MCF 10A (cell line): ENCODE measurements at regions of chr11 and their contacts with region 1.

Region 1: GRCh38 chr11:117833401-117833891 is 8.9 kb upstream of the FXYD2 start:
- DNase-seq: peak; percentile 75
- H3K4me3 Mint-ChIP-seq: no peak overlapping the region
- H3K27ac Mint-ChIP-seq: no peak overlapping the region
- H3K4me1 Mint-ChIP-seq: peaks cover 5% of the 10 kb centered on the region
- H3K27me3 Mint-ChIP-seq: peaks cover 46% of the 10 kb centered on the region
- CTCF ChIP-seq: no peak

Region 2: GRCh38 chr11:117678658-117679406 is 154.6 kb before region 1 on chr11:
- CTCF ChIA-PET with region 1: no interaction called
- POLR2A ChIA-PET with region 1: no interaction called
- intact Hi-C with region 1: no loop called
- DNase-seq: no peak
- H3K4me3 Mint-ChIP-seq: no peak overlapping the region
- H3K27ac Mint-ChIP-seq: no peak overlapping the region
- H3K4me1 Mint-ChIP-seq: no peaks in the 10 kb centered on the region
- H3K27me3 Mint-ChIP-seq: peaks cover 92% of the 10 kb centered on the region
- CTCF ChIP-seq: no peak

Region 3: GRCh38 chr11:117795638-117796455 is 37.6 kb before region 1 on chr11:
- CTCF ChIA-PET with region 1: no interaction called
- POLR2A ChIA-PET with region 1: no interaction called
- intact Hi-C with region 1: no loop called
- DNase-seq: no peak
- H3K4me3 Mint-ChIP-seq: no peak overlapping the region
- H3K27ac Mint-ChIP-seq: no peak overlapping the region
- H3K4me1 Mint-ChIP-seq: no peaks in the 10 kb centered on the region
- H3K27me3 Mint-ChIP-seq: peaks cover 82% of the 10 kb centered on the region
- CTCF ChIP-seq: no peak

Region 4: GRCh38 chr11:117817368-117818040 is 15.9 kb before region 1 on chr11:
- CTCF ChIA-PET with region 1: interaction called, 14 read pairs
- POLR2A ChIA-PET with region 1: no interaction called
- intact Hi-C with region 1: no loop called
- DNase-seq: peak; percentile 70
- H3K4me3 Mint-ChIP-seq: no peak overlapping the region
- H3K27ac Mint-ChIP-seq: peak overlapping the region; percentile 29
- H3K4me1 Mint-ChIP-seq: peaks cover 11% of the 10 kb centered on the region
- H3K27me3 Mint-ChIP-seq: no peaks in the 10 kb centered on the region
- CTCF ChIP-seq: peak; percentile 94